T-cell (primary cell): ENCODE measurements at regions of chr3 and their contacts with region 1.

Region 1: DNA sequence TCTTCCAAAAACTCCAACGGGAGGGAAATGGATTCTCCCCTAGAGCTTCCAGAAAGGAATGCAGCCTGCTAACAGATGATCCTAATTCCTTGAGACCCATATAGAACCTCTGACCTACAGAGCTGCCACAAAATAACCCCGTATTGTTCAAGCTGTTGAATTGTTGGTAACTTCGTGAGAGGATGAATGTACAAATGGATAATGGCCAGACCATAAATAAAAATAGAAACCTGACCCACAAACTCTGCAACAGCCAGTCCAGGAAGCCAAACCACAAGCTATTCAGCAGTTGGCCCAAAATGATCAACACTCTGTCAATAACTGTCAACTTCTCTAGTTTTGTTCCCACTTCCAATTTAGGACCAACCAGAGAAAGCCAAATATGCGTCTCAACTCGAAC is 414.0 kb upstream of the ZNF717 start:
- DNase-seq: no peak
- ATAC-seq: no peak
- H3K4me3 ChIP-seq: no peak overlapping the region
- H3K4me3 Mint-ChIP-seq: no peak overlapping the region
- H3K27ac ChIP-seq: no peak overlapping the region
- H3K27ac Mint-ChIP-seq: no peak overlapping the region
- H3K4me1 ChIP-seq: no peaks in the 10 kb centered on the region
- H3K4me1 Mint-ChIP-seq: no peaks in the 10 kb centered on the region
- H3K27me3 ChIP-seq: no peaks in the 10 kb centered on the region
- H3K27me3 Mint-ChIP-seq: no peaks in the 10 kb centered on the region

Region 2: GRCh38 chr3:76336444-76336843 is 137.1 kb after region 1 on chr3:
- CTCF ChIA-PET with region 1: no interaction called
- POLR2A ChIA-PET with region 1: interaction called in 1 of 2 experiments, 19 read pairs
- DNase-seq: no peak
- ATAC-seq: no peak
- H3K4me3 ChIP-seq: no peak overlapping the region
- H3K4me3 Mint-ChIP-seq: no peak overlapping the region
- H3K27ac ChIP-seq: no peak overlapping the region
- H3K27ac Mint-ChIP-seq: no peak overlapping the region
- H3K4me1 ChIP-seq: no peaks in the 10 kb centered on the region
- H3K4me1 Mint-ChIP-seq: no peaks in the 10 kb centered on the region
- H3K27me3 ChIP-seq: no peaks in the 10 kb centered on the region
- H3K27me3 Mint-ChIP-seq: no peaks in the 10 kb centered on the region